ENCODE measurements at regions of chr2 and their contacts with region 1.

Region 1: GRCh38 chr2:67476809-67477790 is 80.0 kb downstream of the ETAA1 start:
- DNase-seq: no peak
- ATAC-seq: peak; percentile 81
- H3K4me3 ChIP-seq: no peak overlapping the region
- H3K27ac ChIP-seq: no peak overlapping the region
- H3K4me1 ChIP-seq: no peaks in the 10 kb centered on the region
- H3K27me3 ChIP-seq: peaks cover 0 to 2% of the 10 kb centered on the region in 2 experiments; a peak in 1 of 4 replicates
- CTCF ChIP-seq: peak; percentile 5 to 42 (median 19); a peak in 2 of 6 replicates
- EP300 ChIP-seq: no peak
- POLR2A ChIP-seq: no peak
- RAD21 ChIP-seq: peak; percentile 50

Region 2: GRCh38 chr2:66429071-66429477 is 1048.0 kb before region 1 on chr2:
- CTCF ChIA-PET with region 1: interaction called, 6 read pairs
- POLR2A ChIA-PET with region 1: no interaction called
- RAD21 ChIA-PET with region 1: no interaction called
- SMC1A ChIA-PET with region 1: no interaction called
- in situ Hi-C with region 1: no loop called
- intact Hi-C with region 1: loop called (anchors 5 kb)
- DNase-seq: no peak
- ATAC-seq: peak; percentile 61
- H3K4me3 ChIP-seq: no peak overlapping the region
- H3K27ac ChIP-seq: no peak overlapping the region
- H3K4me1 ChIP-seq: no peaks in the 10 kb centered on the region
- H3K27me3 ChIP-seq: peaks cover 6 to 16% of the 10 kb centered on the region in 2 experiments
- CTCF ChIP-seq: peak; percentile 60 to 87 (median 82)
- EP300 ChIP-seq: no peak
- POLR2A ChIP-seq: no peak
- RAD21 ChIP-seq: peak; percentile 88

Region 3: GRCh38 chr2:67234439-67234838 is 242.7 kb before region 1 on chr2:
- CTCF ChIA-PET with region 1: no interaction called
- POLR2A ChIA-PET with region 1: no interaction called
- RAD21 ChIA-PET with region 1: no interaction called
- SMC1A ChIA-PET with region 1: no interaction called
- in situ Hi-C with region 1: no loop called
- intact Hi-C with region 1: loop called (anchors 10 kb)
- DNase-seq: no peak
- ATAC-seq: no peak
- H3K4me3 ChIP-seq: no peak overlapping the region
- H3K27ac ChIP-seq: no peak overlapping the region
- H3K4me1 ChIP-seq: no peaks in the 10 kb centered on the region
- H3K27me3 ChIP-seq: no peaks in the 10 kb centered on the region
- CTCF ChIP-seq: no peak
- EP300 ChIP-seq: no peak
- POLR2A ChIP-seq: no peak
- RAD21 ChIP-seq: no peak

Region 4: GRCh38 chr2:67463810-67464209 is 13.3 kb before region 1 on chr2:
- CTCF ChIA-PET with region 1: interaction called, 4 read pairs
- POLR2A ChIA-PET with region 1: interaction called, 4 read pairs
- RAD21 ChIA-PET with region 1: interaction called, 16 read pairs
- SMC1A ChIA-PET with region 1: interaction called, 21 read pairs
- in situ Hi-C with region 1: no loop called
- intact Hi-C with region 1: no loop called
- DNase-seq: no peak
- ATAC-seq: peak; percentile 81
- H3K4me3 ChIP-seq: no peak overlapping the region
- H3K27ac ChIP-seq: no peak overlapping the region
- H3K4me1 ChIP-seq: no peaks in the 10 kb centered on the region
- H3K27me3 ChIP-seq: no peaks in the 10 kb centered on the region
- CTCF ChIP-seq: no peak
- EP300 ChIP-seq: peak; percentile 90 to 98
- POLR2A ChIP-seq: no peak
- RAD21 ChIP-seq: no peak

Measured in GM12878 (cell line).